ENCODE measurements at regions of chr16 and their contacts with region 1.

Region 1: DNA sequence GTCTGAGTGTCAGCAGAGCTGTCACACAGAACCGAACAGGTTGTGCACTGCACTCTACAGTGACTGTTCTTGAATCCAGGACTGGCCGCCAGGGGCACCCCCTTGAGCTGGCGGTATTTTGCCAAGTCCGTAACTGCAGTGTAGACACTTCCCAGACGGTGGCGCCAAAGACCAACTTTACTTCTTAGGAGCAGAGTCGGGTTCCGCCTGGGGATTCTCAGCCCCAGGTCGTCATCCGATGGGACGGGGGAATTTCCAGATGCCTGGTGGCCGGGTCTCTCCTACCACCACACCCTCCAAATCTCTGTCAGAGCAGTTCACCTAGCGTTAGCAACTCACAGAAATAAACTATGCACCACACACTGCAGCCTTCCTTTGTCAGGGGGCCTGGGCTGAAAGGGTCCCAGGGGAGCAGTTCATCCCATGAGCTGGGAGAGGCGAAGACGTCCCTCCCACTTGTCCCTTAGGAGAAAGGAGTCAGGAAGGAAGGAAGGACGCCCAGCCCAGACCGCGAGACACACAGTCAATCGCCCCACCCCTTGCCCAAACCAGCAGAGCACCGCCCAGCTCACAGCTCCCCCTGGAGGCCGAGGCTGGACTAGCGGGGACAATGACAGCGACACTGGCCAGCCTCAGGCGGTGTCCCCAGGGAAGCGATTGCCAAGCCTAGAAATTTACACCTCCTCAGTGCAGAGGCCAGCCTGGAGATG is 7.4 kb upstream of the RIPOR1 start:
- DNase-seq: peak; percentile 97
- H3K4me3 ChIP-seq: peak overlapping the region; percentile 69
- H3K27ac ChIP-seq: peak overlapping the region; percentile 89
- H3K4me1 ChIP-seq: peaks cover 48% of the 10 kb centered on the region
- CTCF ChIP-seq: peak; percentile 95

Region 2: DNA sequence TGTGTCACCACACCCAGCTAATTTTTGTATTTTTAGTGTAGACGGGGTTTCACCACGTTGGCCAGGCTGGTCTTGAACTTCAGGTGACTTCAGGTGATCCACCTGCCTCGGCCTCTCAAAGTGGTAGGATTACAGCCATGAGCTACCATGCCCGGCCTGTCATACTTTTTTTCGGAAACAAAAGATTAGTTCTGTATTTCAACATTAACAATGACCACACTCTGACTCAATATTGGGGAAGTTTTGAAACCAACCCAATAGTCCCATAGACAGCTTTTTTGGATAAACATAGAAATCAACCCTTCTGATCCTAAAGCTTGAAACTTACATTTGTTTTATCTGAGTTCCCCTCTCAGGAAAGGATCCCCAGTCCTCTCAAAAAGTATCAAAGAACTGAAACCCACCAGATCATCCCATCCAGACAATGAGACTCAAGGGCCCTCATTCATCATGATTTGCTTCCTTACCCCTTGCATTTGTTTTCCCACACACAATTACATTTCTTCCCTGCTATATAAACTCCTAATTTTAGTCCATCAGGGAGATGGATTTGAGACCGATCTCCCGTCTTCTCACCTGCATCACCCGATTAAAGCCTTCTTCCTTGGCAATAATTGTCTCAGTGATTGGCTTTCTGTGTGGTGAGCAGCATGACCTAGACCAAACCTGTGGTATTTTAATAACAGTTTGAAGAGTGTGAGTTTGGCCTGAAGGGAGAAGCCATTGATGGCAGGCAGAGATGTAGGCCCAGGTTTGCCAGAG is 30.7 kb before region 1 on chr16:
- CTCF ChIA-PET with region 1: interaction called, 14 read pairs
- POLR2A ChIA-PET with region 1: interaction called, 23 read pairs
- intact Hi-C with region 1: loop called (anchors 1 kb)
- DNase-seq: no peak
- H3K4me3 ChIP-seq: no peak overlapping the region
- H3K27ac ChIP-seq: no peak overlapping the region
- H3K4me1 ChIP-seq: peaks cover 68% of the 10 kb centered on the region
- CTCF ChIP-seq: no peak

Region 3: DNA sequence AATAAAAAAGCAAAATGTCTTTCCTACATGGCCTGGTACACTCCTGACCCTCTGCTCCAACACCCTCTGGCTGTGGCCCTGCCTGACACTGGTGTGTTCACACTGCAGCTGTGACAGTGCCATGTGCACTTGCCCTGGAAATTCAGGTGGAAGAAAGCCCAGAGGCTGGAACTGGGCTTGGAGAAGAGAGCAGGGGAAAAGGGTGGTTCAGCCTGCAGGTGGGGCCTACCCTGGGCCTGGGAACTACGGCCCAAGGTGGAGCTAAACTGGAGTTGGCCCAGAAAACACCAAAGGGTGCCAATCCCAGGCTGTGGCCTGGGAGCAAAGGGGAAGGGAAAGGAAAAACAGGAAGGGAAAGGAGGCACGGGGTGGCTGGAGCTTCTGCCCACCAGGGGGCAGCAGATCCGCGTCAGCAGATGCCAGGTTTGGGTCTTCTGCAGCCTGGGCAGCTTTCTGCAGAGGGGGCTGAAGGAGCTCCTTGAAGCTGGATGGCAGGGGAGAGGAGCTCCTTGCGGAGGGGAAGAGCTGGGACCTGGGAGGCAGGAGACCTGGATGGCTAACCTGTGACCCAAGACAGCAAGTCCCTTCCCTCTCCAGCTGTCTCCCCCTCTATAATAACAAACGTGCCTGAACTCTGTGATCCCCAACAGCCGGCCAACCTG is 25.6 kb after region 1 on chr16:
- CTCF ChIA-PET with region 1: interaction called, 13 read pairs
- POLR2A ChIA-PET with region 1: interaction called, 7 read pairs
- intact Hi-C with region 1: loop called (anchors 1 kb)
- DNase-seq: peak; percentile 90
- H3K4me3 ChIP-seq: peak overlapping the region; percentile 64
- H3K27ac ChIP-seq: peak overlapping the region; percentile 98
- H3K4me1 ChIP-seq: peaks cover 96% of the 10 kb centered on the region
- CTCF ChIP-seq: peak; percentile 97

Region 4: DNA sequence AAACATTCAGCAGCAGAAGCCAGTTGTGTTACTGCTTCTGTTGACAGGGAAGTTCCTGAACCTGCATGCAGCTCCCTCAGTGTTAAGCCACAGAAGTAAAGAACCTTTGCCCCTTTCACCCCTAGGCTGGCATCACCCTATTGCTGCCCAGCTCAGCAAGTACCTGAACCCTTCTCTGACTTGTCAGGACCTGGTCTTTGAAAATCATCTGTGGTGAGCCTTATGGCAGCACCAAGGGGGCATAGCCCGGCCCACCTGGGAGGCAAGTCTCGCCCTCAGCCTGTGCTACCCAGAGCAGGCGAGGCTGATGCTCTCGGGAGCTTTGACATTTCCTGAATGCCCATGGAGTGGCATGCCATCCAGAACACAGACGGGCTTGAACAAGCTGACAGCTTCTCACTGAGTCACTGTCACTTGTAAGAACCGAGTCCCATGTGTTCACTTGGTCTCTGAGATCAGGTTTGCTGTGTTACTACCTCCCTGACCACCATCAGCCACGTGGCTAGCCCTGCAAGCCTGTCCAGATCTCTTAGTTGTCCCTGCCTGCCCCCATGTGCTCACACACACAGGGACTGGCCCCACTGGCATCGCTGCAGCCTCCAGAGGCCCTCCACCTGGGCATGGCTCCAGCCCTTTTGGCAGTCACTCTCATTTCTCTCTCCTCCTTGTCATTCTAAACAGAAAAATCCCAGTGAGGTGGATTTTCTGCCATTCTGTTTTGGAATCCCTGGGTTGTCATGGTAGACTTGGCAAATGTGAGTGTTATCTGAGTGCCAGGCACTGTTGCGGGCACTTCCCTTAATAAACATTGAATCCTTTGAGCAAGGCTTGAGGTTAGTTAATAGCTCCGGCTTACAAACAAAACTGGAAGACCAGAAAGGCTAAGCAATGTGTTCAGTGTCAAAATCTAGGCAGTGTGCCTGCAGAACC is 120.8 kb after region 1 on chr16:
- CTCF ChIA-PET with region 1: interaction called, 6 read pairs
- POLR2A ChIA-PET with region 1: interaction called, 5 read pairs
- intact Hi-C with region 1: loop called (anchors 1 kb)
- DNase-seq: no peak
- H3K4me3 ChIP-seq: no peak overlapping the region
- H3K27ac ChIP-seq: no peak overlapping the region
- H3K4me1 ChIP-seq: peaks cover 25% of the 10 kb centered on the region
- CTCF ChIP-seq: no peak

Region 5: GRCh38 chr16:67841764-67842508 is 320.7 kb after region 1 on chr16 and contains the start of gene THAP11:
- CTCF ChIA-PET with region 1: no interaction called
- POLR2A ChIA-PET with region 1: no interaction called
- intact Hi-C with region 1: loop called (anchors 1 kb)
- DNase-seq: peak; percentile 97
- H3K4me3 ChIP-seq: peak within 1 kb of the TSS; percentile 99
- H3K27ac ChIP-seq: peak within 1 kb of the TSS; percentile 78
- H3K4me1 ChIP-seq: peaks cover 37% of the 10 kb centered on the region
- CTCF ChIP-seq: peak; percentile 75
- total RNA-seq, gene THAP11: 52.9 and 66.3 TPM in 2 replicates

Measured in OCI-LY7 (cell line).